ENCODE measurements at regions of chr12 and their contacts with region 1.

Region 1: DNA sequence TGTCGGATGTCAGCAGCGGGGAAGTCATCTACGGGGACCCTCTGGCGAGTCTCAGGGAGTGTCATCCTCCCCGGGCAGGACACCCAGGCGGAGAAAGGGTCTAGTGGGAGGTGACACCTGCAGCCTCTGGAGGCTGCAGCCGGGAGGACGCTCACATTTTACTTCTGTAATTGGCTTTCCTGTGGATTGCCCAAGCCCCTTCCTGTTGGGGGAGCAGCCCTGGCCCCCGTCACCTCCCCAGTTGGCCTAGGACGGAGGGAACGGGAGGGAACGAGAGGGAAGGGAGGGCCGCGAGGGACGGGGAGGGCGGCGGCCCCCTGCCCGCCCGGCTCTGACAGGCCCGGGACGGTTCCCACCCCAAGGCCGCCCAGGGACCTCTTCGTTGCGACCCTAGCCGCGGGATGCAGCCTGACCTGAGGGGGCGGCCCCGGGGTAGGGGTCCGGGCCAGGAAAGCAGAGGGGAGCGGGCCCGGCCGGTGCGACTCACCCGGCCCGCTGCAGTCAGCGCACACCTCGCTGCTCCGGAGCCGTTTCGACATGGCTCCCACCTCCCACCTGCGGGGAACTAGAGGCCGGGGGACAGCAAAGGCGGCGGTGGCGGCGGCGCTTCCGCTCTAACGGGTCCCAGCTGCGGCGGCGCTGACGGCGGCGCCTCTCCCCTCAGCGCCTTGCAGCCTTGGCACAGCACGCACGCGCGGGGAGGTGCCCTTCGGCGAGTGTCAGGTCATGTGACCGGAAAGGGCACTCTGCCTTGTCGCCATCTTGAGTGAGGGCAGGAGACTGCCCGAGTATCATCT is at the start of gene GIT2:
- DNase-seq: peak; percentile 92
- H3K4me3 ChIP-seq: peak within 1 kb of the TSS; percentile 85 to 88
- H3K27ac ChIP-seq: peak within 1 kb of the TSS; percentile 48 to 54
- H3K4me1 ChIP-seq: no peaks in the 10 kb centered on the region
- H3K27me3 ChIP-seq: no peaks in the 10 kb centered on the region
- CTCF ChIP-seq: no peak
- POLR2A ChIP-seq: peak; percentile 74
- total RNA-seq, gene GIT2: 20.9 to 43.3 TPM

Region 2: DNA sequence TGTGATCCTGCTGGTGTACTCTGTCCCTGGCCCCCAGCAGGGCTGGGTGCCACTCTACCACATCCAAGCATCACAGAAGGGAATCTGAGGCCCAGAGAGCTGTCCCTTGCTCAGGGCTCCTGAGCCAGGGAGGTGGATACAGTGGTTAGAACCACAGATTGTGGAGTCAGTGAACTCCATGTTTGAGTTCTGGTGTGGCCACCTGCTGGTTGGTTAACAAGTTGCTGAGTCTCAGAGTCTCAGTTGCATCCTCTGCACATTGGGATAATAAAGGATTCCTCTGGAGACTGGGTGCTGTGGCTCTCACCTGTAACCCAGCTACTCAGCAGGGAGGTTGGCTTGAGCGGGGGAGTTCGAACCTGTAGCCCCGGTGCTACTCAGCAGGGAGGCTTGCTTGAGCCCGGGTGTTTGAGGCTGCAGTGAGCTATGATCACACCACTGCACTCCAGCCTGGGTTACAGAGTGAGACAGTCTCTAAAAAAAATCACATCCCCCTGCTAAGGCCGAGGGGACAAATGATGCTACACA is 382.8 kb before region 1 on chr12:
- intact Hi-C with region 1: no loop called
- DNase-seq: no peak
- H3K4me3 ChIP-seq: no peak overlapping the region
- H3K27ac ChIP-seq: no peak overlapping the region
- H3K4me1 ChIP-seq: no peaks in the 10 kb centered on the region
- H3K27me3 ChIP-seq: no peaks in the 10 kb centered on the region
- CTCF ChIP-seq: no peak
- POLR2A ChIP-seq: no peak

Region 3: GRCh38 chr12:109899783-109900751 is 95.8 kb before region 1 on chr12 and contains the start of gene TCHP:
- intact Hi-C with region 1: loop called (anchors 5 kb)
- DNase-seq: peak; percentile 84
- H3K4me3 ChIP-seq: peak within 1 kb of the TSS; percentile 78 to 80
- H3K27ac ChIP-seq: peak within 1 kb of the TSS; percentile 59 to 74
- H3K4me1 ChIP-seq: no peaks in the 10 kb centered on the region
- H3K27me3 ChIP-seq: no peaks in the 10 kb centered on the region
- CTCF ChIP-seq: peak in 3 of 4 experiments; percentile 33 to 65 (median 56)
- POLR2A ChIP-seq: peak; percentile 17
- total RNA-seq, gene TCHP: 18.9 to 26.3 TPM

Region 4: GRCh38 chr12:109934026-109934425 is 61.9 kb before region 1 on chr12:
- intact Hi-C with region 1: loop called (anchors 5 kb)
- DNase-seq: no peak
- H3K4me3 ChIP-seq: no peak overlapping the region
- H3K27ac ChIP-seq: no peak overlapping the region
- H3K4me1 ChIP-seq: no peaks in the 10 kb centered on the region
- H3K27me3 ChIP-seq: no peaks in the 10 kb centered on the region
- CTCF ChIP-seq: peak in 1 of 4 experiments; percentile 17
- POLR2A ChIP-seq: no peak

Region 5: DNA sequence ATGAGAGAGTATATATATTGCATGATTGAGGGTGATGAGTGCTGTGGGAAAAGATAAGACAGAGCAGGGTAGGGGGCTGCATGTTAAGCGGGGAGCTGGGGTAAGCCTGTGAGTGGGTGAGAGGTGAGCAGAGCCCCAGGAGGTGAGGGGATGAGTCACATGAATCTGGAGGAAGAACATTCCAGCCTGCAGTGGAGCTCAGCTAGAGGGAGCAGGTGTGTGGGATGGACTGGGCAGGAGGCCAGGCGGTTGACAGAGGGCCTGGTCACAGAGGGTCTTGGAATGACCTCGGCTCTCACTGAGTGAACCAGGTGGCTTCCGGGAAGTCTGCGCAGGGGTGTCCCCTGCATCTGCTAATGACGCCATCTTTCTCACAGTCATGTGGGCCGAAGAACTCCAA is 44.1 kb before region 1 on chr12:
- intact Hi-C with region 1: loop called (anchors 5 kb)
- DNase-seq: no peak
- H3K4me3 ChIP-seq: no peak overlapping the region
- H3K27ac ChIP-seq: peak overlapping the region in 1 of 2 donors; percentile 13
- H3K4me1 ChIP-seq: no peaks in the 10 kb centered on the region
- H3K27me3 ChIP-seq: no peaks in the 10 kb centered on the region
- CTCF ChIP-seq: no peak
- POLR2A ChIP-seq: no peak

Region 6: GRCh38 chr12:110355073-110355472 is 359.2 kb after region 1 on chr12:
- intact Hi-C with region 1: no loop called
- DNase-seq: no peak
- H3K4me3 ChIP-seq: no peak overlapping the region
- H3K27ac ChIP-seq: peak overlapping the region in 1 of 2 donors; percentile 43
- H3K4me1 ChIP-seq: no peaks in the 10 kb centered on the region
- H3K27me3 ChIP-seq: no peaks in the 10 kb centered on the region
- CTCF ChIP-seq: no peak
- POLR2A ChIP-seq: no peak

Measured in prostate gland (tissue), 2 donors.